MCF 10A (cell line): ENCODE measurements at regions of chr18 and their contacts with region 1.

Region 1: DNA sequence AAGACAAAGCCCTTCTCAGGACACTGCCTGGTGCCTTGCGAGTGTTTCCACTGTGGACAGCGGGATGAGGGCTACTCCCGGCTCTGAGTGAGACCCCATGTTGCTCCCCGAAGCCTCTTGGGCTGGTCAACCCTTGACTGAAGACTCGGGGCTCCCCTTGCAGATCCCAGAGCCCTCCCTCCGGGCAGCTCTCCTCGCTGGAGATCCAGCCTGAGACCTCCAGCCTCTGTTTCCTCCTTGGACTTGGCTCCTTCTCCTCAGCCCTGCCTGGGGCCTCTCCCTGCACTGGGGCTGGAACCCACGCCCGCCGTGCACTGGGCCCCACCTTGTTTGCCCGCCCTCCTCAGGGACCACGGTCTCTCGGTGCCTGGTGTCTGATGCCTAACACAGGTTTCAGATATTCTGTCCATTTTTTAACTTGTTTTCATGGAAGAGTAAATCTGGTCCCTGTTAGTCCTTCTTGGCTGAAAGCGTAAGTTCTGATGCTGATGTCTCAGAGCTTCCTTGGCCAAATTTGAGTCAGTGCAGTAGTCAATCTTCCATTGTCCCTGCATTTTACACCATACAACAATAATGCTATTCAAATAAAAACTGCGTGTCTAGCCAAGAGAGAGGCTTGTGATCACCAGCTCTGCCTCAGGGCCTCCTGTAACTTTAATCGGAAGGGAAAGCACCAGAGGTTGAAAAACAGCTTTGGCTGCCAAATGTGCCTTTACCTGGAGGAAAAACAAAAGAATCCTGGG is 139.3 kb upstream of the CTDP1 start:
- DNase-seq: no peak
- H3K4me3 Mint-ChIP-seq: no peak overlapping the region
- H3K27ac Mint-ChIP-seq: no peak overlapping the region
- H3K4me1 Mint-ChIP-seq: no peaks in the 10 kb centered on the region
- H3K27me3 Mint-ChIP-seq: no peaks in the 10 kb centered on the region
- CTCF ChIP-seq: no peak

Region 2: GRCh38 chr18:79528846-79529245 is 11.5 kb before region 1 on chr18:
- CTCF ChIA-PET with region 1: interaction called, 15 read pairs
- POLR2A ChIA-PET with region 1: no interaction called
- intact Hi-C with region 1: no loop called
- DNase-seq: peak; percentile 46
- H3K4me3 Mint-ChIP-seq: no peak overlapping the region
- H3K27ac Mint-ChIP-seq: no peak overlapping the region
- H3K4me1 Mint-ChIP-seq: no peaks in the 10 kb centered on the region
- H3K27me3 Mint-ChIP-seq: no peaks in the 10 kb centered on the region
- CTCF ChIP-seq: peak; percentile 48